Heart left ventricle (tissue), 16 donors: ENCODE measurements at regions of chr9 and their contacts with region 1.

Region 1: GRCh38 chr9:113591001-113591898 is 127.7 kb downstream of the RGS3 start:
- DNase-seq: peak; percentile 82 to 90 (median 85)
- ATAC-seq: peak in 3 of 4 donors; percentile 5 to 18 (median 12)
- H3K4me3 ChIP-seq: no peak overlapping the region
- H3K27ac ChIP-seq: peak overlapping the region; percentile 13 to 97 (median 76)
- H3K4me1 ChIP-seq: peaks cover 7 to 89% (median 76%) of the 10 kb centered on the region in 12 donors
- H3K27me3 ChIP-seq: no peaks in the 10 kb centered on the region
- CTCF ChIP-seq: peak; percentile 86 to 98 (median 94)
- POLR2A ChIP-seq: no peak

Region 2: DNA sequence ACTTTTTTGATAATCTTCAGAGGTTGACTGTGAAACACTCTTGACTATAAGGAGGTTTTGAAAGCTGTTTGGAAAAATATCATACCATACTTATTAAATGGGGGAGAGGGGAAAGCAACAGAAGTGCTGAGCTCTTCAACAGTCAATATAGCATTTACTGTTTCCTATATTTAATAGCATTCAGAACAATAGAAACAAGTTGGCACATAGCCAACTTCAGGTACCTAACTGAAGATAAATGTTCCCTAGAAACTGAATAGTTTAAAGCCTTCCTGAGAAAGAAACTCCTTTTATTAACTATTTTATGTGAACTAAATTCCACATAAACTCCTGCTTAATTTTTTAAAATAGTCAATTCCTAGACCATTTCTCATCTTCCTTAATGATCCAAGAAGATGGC is 343.6 kb before region 1 on chr9:
- intact Hi-C with region 1: no loop called
- DNase-seq: no peak
- ATAC-seq: no peak
- H3K4me3 ChIP-seq: no peak overlapping the region
- H3K27ac ChIP-seq: no peak overlapping the region
- H3K4me1 ChIP-seq: peaks cover 0 to 8% (median 0%) of the 10 kb centered on the region in 12 donors
- H3K27me3 ChIP-seq: no peaks in the 10 kb centered on the region
- CTCF ChIP-seq: no peak
- POLR2A ChIP-seq: no peak

Region 3: DNA sequence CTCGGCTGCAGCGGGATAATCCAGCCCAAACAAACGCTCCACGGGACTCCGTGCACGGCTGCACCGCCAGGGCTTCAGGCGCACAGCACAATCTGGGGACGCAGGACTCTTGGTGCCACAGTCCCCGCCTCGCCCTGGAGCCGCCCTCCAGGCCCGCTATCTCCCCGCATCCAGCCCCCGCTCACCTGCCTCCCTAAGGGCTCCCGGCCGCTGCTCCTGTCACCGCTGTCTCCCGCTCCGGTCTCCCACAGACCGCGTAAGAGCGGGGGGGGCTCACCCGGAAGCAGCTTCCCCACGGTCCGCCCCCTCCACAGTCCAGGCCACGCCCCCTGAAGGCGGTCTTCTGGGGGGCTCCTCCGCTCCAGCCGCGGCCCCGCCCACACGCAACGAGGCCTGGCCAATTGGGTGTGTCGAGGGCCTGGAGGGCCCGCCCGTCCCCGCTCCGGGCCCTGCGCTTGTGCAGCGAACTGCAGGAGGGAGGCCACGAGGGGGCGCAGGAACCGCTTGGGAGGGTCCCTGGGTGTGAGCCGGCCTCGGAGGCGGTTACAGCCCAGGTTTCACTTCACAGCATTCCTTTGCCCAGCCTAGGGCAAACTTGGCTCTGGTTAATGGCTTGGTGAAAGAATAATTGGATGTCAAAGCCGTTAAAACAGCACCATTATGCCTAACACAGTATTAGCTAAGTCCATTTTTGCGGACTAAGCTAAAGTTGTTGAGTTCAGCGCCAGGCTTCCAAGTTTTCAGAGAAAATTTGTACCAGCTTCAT is 190.0 kb before region 1 on chr9 and contains the start of gene ALAD:
- intact Hi-C with region 1: loop called in 1 of 10 experiments (anchors 5 kb)
- DNase-seq: peak; percentile 99 to 100 (median 100)
- ATAC-seq: peak; percentile 98 to 99 (median 99)
- H3K4me3 ChIP-seq: peak within 1 kb of the TSS; percentile 70 to 94 (median 88)
- H3K27ac ChIP-seq: peak within 1 kb of the TSS; percentile 48 to 88 (median 74)
- H3K4me1 ChIP-seq: peaks cover 0 to 49% (median 23%) of the 10 kb centered on the region in 12 donors
- H3K27me3 ChIP-seq: no peaks in the 10 kb centered on the region
- CTCF ChIP-seq: peak; percentile 93 to 100 (median 97)
- POLR2A ChIP-seq: peak in 1 of 2 donors; percentile 83
- total RNA-seq, gene ALAD: 39.8 to 153 (median 91.8) TPM

Region 4: DNA sequence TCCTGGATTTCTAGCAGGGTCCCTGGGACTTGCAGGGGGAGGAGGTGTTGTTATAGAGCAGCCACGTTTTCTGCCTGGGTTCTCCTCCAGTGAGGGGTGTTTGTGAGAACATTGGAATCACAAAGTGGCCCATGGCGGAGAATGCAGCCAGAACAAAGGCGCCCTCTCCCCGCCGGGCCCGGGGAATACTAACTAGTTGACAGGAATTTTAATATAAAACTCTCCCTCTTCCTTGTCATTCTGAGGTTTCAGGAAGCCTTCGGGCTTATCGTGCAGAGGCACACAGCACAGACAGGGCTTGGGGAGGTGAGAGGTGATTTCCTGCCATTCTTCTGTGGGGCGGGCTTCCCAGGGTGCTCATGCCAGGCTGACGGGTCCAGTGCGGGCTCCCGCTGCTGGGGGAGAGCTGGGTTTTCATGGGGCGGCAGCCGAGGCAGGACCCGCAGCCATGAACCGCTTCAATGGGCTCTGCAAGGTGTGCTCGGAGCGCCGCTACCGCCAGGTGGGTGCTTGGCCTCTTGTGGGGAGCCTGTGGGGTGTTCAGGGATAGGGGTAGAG is 90.0 kb before region 1 on chr9:
- intact Hi-C with region 1: loop called in 4 of 10 experiments (anchors 5 to 10 kb)
- DNase-seq: peak in 4 of 5 donors; percentile 59 to 72 (median 68)
- ATAC-seq: peak in 3 of 4 donors; percentile 66 to 77 (median 72)
- H3K4me3 ChIP-seq: peak overlapping the region; percentile 23 to 71 (median 62)
- H3K27ac ChIP-seq: peak overlapping the region; percentile 67 to 91 (median 87)
- H3K4me1 ChIP-seq: peaks cover 0 to 64% (median 30%) of the 10 kb centered on the region in 12 donors
- H3K27me3 ChIP-seq: no peaks in the 10 kb centered on the region
- CTCF ChIP-seq: peak in 2 of 12 donors; percentile 25 to 27
- POLR2A ChIP-seq: peak in 1 of 2 donors; percentile 40

Region 5: GRCh38 chr9:113620377-113621161 is 29.3 kb after region 1 on chr9:
- intact Hi-C with region 1: loop called in 7 of 10 experiments (anchors 1 to 2 kb)
- DNase-seq: peak in 4 of 5 donors; percentile 78 to 83 (median 82)
- ATAC-seq: peak; percentile 68 to 80 (median 72)
- H3K4me3 ChIP-seq: peak overlapping the region in 7 of 12 donors; percentile 4 to 19 (median 9)
- H3K27ac ChIP-seq: peak overlapping the region; percentile 60 to 95 (median 86)
- H3K4me1 ChIP-seq: peaks cover 4 to 87% (median 61%) of the 10 kb centered on the region in 12 donors
- H3K27me3 ChIP-seq: no peaks in the 10 kb centered on the region
- CTCF ChIP-seq: no peak
- POLR2A ChIP-seq: no peak

Region 6: GRCh38 chr9:113934829-113935676 is 343.8 kb after region 1 on chr9:
- intact Hi-C with region 1: no loop called
- DNase-seq: no peak
- ATAC-seq: peak in 1 of 4 donors; percentile 24
- H3K4me3 ChIP-seq: no peak overlapping the region
- H3K27ac ChIP-seq: no peak overlapping the region
- H3K4me1 ChIP-seq: peaks cover 0 to 17% (median 2%) of the 10 kb centered on the region in 12 donors
- H3K27me3 ChIP-seq: no peaks in the 10 kb centered on the region
- CTCF ChIP-seq: no peak
- POLR2A ChIP-seq: no peak